H1 (cell line): ENCODE measurements at regions of chr4 and their contacts with region 1.

Region 1: DNA sequence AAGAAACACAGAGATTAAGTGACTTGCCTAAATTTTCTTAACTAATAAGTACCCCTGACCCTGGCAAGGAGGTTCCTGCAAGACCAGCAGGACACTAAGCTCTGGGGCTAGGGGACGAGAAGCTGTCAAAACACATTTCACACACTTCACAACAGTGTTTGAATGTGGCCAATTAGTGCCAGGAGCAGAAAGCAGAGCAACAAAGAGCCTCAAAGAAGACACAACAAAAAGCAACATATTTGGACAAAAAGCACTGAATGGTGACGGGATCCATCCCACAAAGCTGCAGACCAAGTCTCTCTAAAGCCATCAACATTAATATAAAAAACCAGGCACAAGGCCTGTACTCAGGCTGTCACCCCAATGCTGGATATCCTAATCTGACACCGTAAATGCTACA is 361.9 kb upstream of the RASGEF1B start:
- DNase-seq: no peak
- H3K4me3 ChIP-seq: no peak overlapping the region
- H3K27ac ChIP-seq: no peak overlapping the region
- H3K4me1 ChIP-seq: no peaks in the 10 kb centered on the region
- H3K27me3 ChIP-seq: no peaks in the 10 kb centered on the region
- CTCF ChIP-seq: no peak
- EP300 ChIP-seq: no peak
- POLR2A ChIP-seq: no peak
- RAD21 ChIP-seq: no peak

Region 2: GRCh38 chr4:81802285-81802846 is 31.2 kb before region 1 on chr4:
- CTCF ChIA-PET with region 1: no interaction called
- POLR2A ChIA-PET with region 1: no interaction called
- DNase-seq: no peak
- H3K4me3 ChIP-seq: no peak overlapping the region
- H3K27ac ChIP-seq: no peak overlapping the region
- H3K4me1 ChIP-seq: no peaks in the 10 kb centered on the region
- H3K27me3 ChIP-seq: peaks cover 0 to 1% (median 0%) of the 10 kb centered on the region in 4 experiments; a peak in 1 of 7 replicates
- CTCF ChIP-seq: no peak
- EP300 ChIP-seq: no peak
- POLR2A ChIP-seq: no peak
- RAD21 ChIP-seq: no peak

Region 3: GRCh38 chr4:81844717-81845116 is 11.1 kb after region 1 on chr4:
- CTCF ChIA-PET with region 1: interaction called, 11 read pairs
- POLR2A ChIA-PET with region 1: no interaction called
- DNase-seq: peak; percentile 9 to 80
- H3K4me3 ChIP-seq: no peak overlapping the region
- H3K27ac ChIP-seq: no peak overlapping the region
- H3K4me1 ChIP-seq: no peaks in the 10 kb centered on the region
- H3K27me3 ChIP-seq: peaks cover 0 to 1% (median 0%) of the 10 kb centered on the region in 4 experiments; a peak in 1 of 7 replicates
- CTCF ChIP-seq: peak in 2 of 3 experiments; percentile 64 to 77; a peak in 3 of 4 replicates
- EP300 ChIP-seq: no peak
- POLR2A ChIP-seq: no peak
- RAD21 ChIP-seq: peak; percentile 86 to 88